Activated CD4-positive, alpha-beta memory T cell treated with anti-CD3 and anti-CD28 coated beads for 36 hours (primary cell): ENCODE measurements at regions of chr18 and their contacts with region 1.

Region 1: GRCh38 chr18:74116633-74117554 is 30.7 kb downstream of the FBXO15 start:
- DNase-seq: peak; percentile 27
- H3K4me3 Mint-ChIP-seq: no peak overlapping the region
- H3K27ac Mint-ChIP-seq: no peak overlapping the region
- H3K4me1 Mint-ChIP-seq: no peaks in the 10 kb centered on the region
- H3K27me3 Mint-ChIP-seq: no peaks in the 10 kb centered on the region

Region 2: GRCh38 chr18:74040459-74041332 is 76.2 kb before region 1 on chr18:
- CTCF ChIA-PET with region 1: interaction called, 9 read pairs
- POLR2A ChIA-PET with region 1: no interaction called
- intact Hi-C with region 1: loop called (anchors 1 kb)
- DNase-seq: peak; percentile 78
- H3K4me3 Mint-ChIP-seq: no peak overlapping the region
- H3K27ac Mint-ChIP-seq: no peak overlapping the region
- H3K4me1 Mint-ChIP-seq: no peaks in the 10 kb centered on the region
- H3K27me3 Mint-ChIP-seq: peaks cover 3% of the 10 kb centered on the region